Activated naive CD4-positive, alpha-beta T cell treated with anti-CD3 and anti-CD28 coated beads for 36 hours (primary cell): ENCODE measurements at regions of chr6 and their contacts with region 1.

Region 1: GRCh38 chr6:7725849-7726415 is at the start of gene BMP6:
- DNase-seq: peak; percentile 69
- H3K4me3 Mint-ChIP-seq: peak within 1 kb of the TSS; percentile 76
- H3K27ac Mint-ChIP-seq: no peak within 1 kb of the TSS
- H3K4me1 Mint-ChIP-seq: peaks cover 12% of the 10 kb centered on the region
- H3K27me3 Mint-ChIP-seq: peaks cover 65% of the 10 kb centered on the region
- total RNA-seq, gene BMP6: 0.32 to 0.36 TPM

Region 2: GRCh38 chr6:7270320-7271204 is 455.4 kb before region 1 on chr6:
- CTCF ChIA-PET with region 1: no interaction called
- intact Hi-C with region 1: loop called (anchors 10 kb)
- DNase-seq: no peak
- H3K4me3 Mint-ChIP-seq: no peak overlapping the region
- H3K27ac Mint-ChIP-seq: no peak overlapping the region
- H3K4me1 Mint-ChIP-seq: no peaks in the 10 kb centered on the region
- H3K27me3 Mint-ChIP-seq: no peaks in the 10 kb centered on the region

Region 3: GRCh38 chr6:7761051-7761450 is 35.1 kb after region 1 on chr6:
- CTCF ChIA-PET with region 1: no interaction called
- intact Hi-C with region 1: no loop called
- DNase-seq: no peak
- H3K4me3 Mint-ChIP-seq: no peak overlapping the region
- H3K27ac Mint-ChIP-seq: no peak overlapping the region
- H3K4me1 Mint-ChIP-seq: no peaks in the 10 kb centered on the region
- H3K27me3 Mint-ChIP-seq: peaks cover 28% of the 10 kb centered on the region

Region 4: DNA sequence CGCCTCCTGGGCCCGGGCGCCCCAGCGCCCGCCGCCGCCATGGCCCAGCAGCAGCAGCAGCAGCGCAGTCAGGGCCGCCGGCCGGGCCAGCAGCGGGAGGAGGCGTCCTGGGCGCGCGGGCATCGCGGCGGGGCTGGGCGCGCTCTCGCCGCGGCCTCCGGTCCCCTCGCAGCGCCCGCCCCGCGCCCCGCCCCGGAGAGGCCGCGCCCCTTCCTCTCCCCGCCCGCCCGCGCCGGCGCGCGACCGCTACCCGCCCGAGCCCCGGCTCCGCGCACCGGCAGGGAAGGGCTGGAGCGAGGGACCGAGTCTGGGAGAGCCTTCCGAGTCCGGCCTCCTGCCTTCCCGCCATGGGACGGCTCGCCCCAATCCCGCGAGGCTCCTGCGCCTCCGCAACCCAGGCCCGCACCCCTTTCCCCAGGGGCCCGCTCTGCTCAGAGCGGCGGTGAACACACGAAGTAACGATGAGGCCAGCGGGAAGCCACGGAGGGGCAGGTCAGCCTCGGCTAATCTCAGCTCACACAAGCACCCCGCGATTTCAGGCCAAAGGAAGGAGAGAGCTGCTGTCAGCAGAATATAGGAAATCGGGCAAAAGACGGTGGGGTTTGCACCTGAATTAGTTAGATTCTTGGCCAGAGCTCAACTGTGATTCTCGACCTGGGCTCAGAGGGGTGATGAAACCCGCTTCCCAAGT is 184.9 kb after region 1 on chr6 and contains the start of gene TXNDC5:
- CTCF ChIA-PET with region 1: interaction called, 5 read pairs
- intact Hi-C with region 1: loop called (anchors 1 kb)
- DNase-seq: peak; percentile 71
- H3K4me3 Mint-ChIP-seq: peak within 1 kb of the TSS; percentile 81
- H3K27ac Mint-ChIP-seq: peak within 1 kb of the TSS; percentile 38
- H3K4me1 Mint-ChIP-seq: peaks cover 14% of the 10 kb centered on the region
- H3K27me3 Mint-ChIP-seq: no peaks in the 10 kb centered on the region
- total RNA-seq, gene TXNDC5: 60.7 to 62.2 TPM

Region 5: DNA sequence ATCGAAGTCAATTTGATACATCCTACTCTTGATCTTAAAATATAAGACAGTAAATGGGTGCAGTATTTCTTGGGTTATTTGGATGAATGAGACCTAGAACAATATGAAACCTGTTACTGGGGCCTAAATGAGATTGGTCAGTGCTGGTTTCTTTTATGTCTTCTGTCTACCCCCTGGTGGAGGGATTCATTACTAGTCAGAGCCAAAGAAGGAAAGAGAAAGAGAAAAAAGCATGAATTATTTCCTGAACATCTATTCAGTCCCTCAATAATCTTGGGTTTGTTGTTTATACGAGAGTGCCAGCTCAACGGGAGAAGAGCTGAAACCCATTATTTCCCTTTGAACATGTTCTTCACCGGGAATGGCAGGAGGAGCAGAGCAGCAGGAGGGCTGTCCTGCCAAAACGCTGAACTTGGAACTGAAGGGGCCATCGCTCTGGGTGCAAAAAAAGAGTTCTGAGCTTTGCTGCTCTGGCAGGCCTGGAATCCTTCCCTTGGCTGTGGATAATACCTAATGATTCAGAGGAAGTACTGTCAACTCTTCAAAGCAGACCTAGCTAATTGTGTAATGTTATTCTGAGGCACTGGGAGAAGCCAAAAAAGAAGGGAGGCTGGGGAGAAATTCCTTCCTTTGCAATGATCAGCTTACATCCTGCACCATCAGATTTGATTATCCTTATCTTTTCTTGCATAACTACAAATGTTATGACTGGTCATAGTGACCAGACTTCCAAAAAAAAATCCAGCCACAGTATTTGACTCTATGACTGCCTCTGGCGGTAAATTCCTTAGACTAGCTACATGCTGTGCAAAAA is 266.3 kb after region 1 on chr6:
- CTCF ChIA-PET with region 1: interaction called, 4 read pairs
- intact Hi-C with region 1: loop called (anchors 5 kb)
- DNase-seq: no peak
- H3K4me3 Mint-ChIP-seq: no peak overlapping the region
- H3K27ac Mint-ChIP-seq: no peak overlapping the region
- H3K4me1 Mint-ChIP-seq: no peaks in the 10 kb centered on the region
- H3K27me3 Mint-ChIP-seq: no peaks in the 10 kb centered on the region

Region 6: GRCh38 chr6:8006208-8006607 is 280.3 kb after region 1 on chr6:
- CTCF ChIA-PET with region 1: interaction called, 19 read pairs
- intact Hi-C with region 1: loop called (anchors 1 kb)
- DNase-seq: peak; percentile 25
- H3K4me3 Mint-ChIP-seq: no peak overlapping the region
- H3K27ac Mint-ChIP-seq: no peak overlapping the region
- H3K4me1 Mint-ChIP-seq: peaks cover 4% of the 10 kb centered on the region
- H3K27me3 Mint-ChIP-seq: no peaks in the 10 kb centered on the region

Region 7: GRCh38 chr6:8219352-8219943 is 493.5 kb after region 1 on chr6:
- CTCF ChIA-PET with region 1: interaction called, 19 read pairs
- intact Hi-C with region 1: loop called (anchors 1 kb)
- DNase-seq: peak; percentile 66
- H3K4me3 Mint-ChIP-seq: no peak overlapping the region
- H3K27ac Mint-ChIP-seq: no peak overlapping the region
- H3K4me1 Mint-ChIP-seq: no peaks in the 10 kb centered on the region
- H3K27me3 Mint-ChIP-seq: peaks cover 6% of the 10 kb centered on the region